Calu3 (cell line): ENCODE measurements at regions of chr12 and their contacts with region 1.

Region 1: DNA sequence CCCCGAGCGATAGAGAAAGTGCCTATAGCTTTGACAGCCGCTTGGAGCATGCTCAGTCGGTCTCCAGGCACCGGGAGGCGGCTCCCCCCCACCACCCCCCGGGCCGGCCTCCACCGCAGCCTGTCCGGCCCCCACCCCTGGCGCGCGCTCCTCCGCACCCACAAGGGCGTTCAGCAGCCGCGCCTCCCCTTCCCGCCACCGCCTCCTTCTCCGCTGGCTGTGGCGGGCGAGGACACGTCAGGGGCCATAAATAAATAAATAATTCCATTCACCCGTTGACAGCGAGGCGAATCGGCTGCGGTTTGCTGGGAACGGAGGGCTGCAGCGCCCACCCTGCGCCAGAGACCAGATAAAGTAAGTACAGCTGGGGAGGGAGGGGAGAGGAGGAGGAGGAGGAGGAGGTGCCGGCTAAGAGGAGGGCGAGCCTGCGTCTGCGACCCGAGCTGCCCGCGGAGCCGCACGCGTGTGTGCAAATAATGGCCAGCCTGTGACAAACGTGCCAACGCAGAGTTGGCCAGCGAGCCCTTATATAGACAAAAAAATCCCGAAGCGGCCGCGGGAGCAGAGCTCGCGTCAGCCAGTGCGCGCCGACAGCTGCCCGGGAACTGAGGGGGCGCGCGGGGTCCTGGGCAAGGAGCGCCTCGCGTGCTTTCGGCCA is at the start of gene SLC16A7:
- DNase-seq: peak; percentile 91
- H3K4me3 Mint-ChIP-seq: peak within 1 kb of the TSS; percentile 99
- H3K27ac Mint-ChIP-seq: peak within 1 kb of the TSS; percentile 96
- H3K4me1 Mint-ChIP-seq: peaks cover 39% of the 10 kb centered on the region
- H3K27me3 Mint-ChIP-seq: no peaks in the 10 kb centered on the region
- CTCF ChIP-seq: no peak
- total RNA-seq, gene SLC16A7: 51.3 and 58.6 TPM in 2 replicates

Region 2: GRCh38 chr12:59403259-59403932 is 192.6 kb before region 1 on chr12:
- CTCF ChIA-PET with region 1: interaction called, 3 read pairs
- intact Hi-C with region 1: loop called (anchors 2 kb)
- DNase-seq: peak; percentile 60
- H3K4me3 Mint-ChIP-seq: peak overlapping the region; percentile 44
- H3K27ac Mint-ChIP-seq: peak overlapping the region; percentile 82
- H3K4me1 Mint-ChIP-seq: peaks cover 11% of the 10 kb centered on the region
- H3K27me3 Mint-ChIP-seq: no peaks in the 10 kb centered on the region
- CTCF ChIP-seq: peak; percentile 71

Region 3: DNA sequence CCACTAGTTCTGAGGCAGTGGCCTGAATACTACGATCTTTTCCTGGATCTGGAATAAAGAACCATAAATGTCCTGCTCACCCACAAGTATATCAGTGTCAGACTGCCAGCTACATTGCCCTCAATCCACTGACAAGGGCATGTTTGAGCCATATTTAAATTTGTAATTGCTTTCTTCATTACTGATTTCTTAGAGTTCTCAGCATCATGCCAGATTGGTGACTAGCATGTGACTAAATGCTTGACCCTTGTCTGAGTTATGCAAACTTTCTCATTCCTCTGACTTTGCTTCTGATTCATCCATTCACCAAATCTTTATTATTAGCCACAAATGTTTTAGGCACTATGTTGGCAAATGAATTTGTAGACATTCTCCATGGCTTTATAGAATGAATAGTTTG is 143.8 kb before region 1 on chr12:
- CTCF ChIA-PET with region 1: interaction called, 7 read pairs
- intact Hi-C with region 1: loop called (anchors 2 kb)
- DNase-seq: peak; percentile 37
- H3K4me3 Mint-ChIP-seq: no peak overlapping the region
- H3K27ac Mint-ChIP-seq: peak overlapping the region; percentile 57
- H3K4me1 Mint-ChIP-seq: peaks cover 38% of the 10 kb centered on the region
- H3K27me3 Mint-ChIP-seq: no peaks in the 10 kb centered on the region
- CTCF ChIP-seq: no peak

Region 4: DNA sequence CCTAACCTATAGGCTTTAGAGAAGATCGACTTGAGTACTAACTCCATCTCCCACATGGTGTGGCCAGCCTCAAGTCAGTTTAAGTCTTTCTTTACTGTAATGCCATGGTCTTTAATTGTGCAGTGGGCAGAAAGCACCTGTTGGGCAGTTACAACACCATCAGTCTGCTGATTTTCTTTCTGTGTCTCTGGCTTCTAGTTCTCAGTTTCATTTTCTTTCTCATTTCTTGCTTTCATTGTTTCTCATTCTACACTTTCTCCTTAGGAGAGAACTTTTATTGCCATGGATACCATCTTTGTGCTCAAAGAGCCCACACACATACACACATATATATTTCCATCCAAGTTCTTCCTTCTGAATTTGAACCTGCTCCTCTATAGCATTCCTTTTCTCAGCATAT is 96.2 kb before region 1 on chr12:
- CTCF ChIA-PET with region 1: no interaction called
- intact Hi-C with region 1: loop called (anchors 2 kb)
- DNase-seq: no peak
- H3K4me3 Mint-ChIP-seq: no peak overlapping the region
- H3K27ac Mint-ChIP-seq: peak overlapping the region; percentile 50
- H3K4me1 Mint-ChIP-seq: peaks cover 31% of the 10 kb centered on the region
- H3K27me3 Mint-ChIP-seq: no peaks in the 10 kb centered on the region
- CTCF ChIP-seq: no peak

Region 5: GRCh38 chr12:59650402-59651228 is 54.6 kb after region 1 on chr12:
- CTCF ChIA-PET with region 1: interaction called, 9 read pairs
- intact Hi-C with region 1: loop called (anchors 1 kb)
- DNase-seq: peak; percentile 35
- H3K4me3 Mint-ChIP-seq: peak overlapping the region; percentile 22
- H3K27ac Mint-ChIP-seq: peak overlapping the region; percentile 76
- H3K4me1 Mint-ChIP-seq: peaks cover 26% of the 10 kb centered on the region
- H3K27me3 Mint-ChIP-seq: no peaks in the 10 kb centered on the region
- CTCF ChIP-seq: no peak

Region 6: GRCh38 chr12:59780605-59781135 is 184.7 kb after region 1 on chr12:
- CTCF ChIA-PET with region 1: no interaction called
- intact Hi-C with region 1: loop called (anchors 5 kb)
- DNase-seq: peak; percentile 26
- H3K4me3 Mint-ChIP-seq: no peak overlapping the region
- H3K27ac Mint-ChIP-seq: no peak overlapping the region
- H3K4me1 Mint-ChIP-seq: no peaks in the 10 kb centered on the region
- H3K27me3 Mint-ChIP-seq: no peaks in the 10 kb centered on the region
- CTCF ChIP-seq: peak; percentile 43

Region 7: GRCh38 chr12:59808317-59808910 is 212.4 kb after region 1 on chr12:
- CTCF ChIA-PET with region 1: no interaction called
- intact Hi-C with region 1: loop called (anchors 5 kb)
- DNase-seq: no peak
- H3K4me3 Mint-ChIP-seq: no peak overlapping the region
- H3K27ac Mint-ChIP-seq: no peak overlapping the region
- H3K4me1 Mint-ChIP-seq: peaks cover 8% of the 10 kb centered on the region
- H3K27me3 Mint-ChIP-seq: no peaks in the 10 kb centered on the region
- CTCF ChIP-seq: peak; percentile 73